ENCODE measurements at regions of chr16 and their contacts with region 1.

Region 1: GRCh38 chr16:54929090-54930004 is 1.3 kb upstream of the IRX5 start:
- DNase-seq: peak; percentile 99
- H3K4me3 Mint-ChIP-seq: peak overlapping the region; percentile 88
- H3K27ac Mint-ChIP-seq: peak overlapping the region; percentile 97
- H3K4me1 Mint-ChIP-seq: peaks cover 21% of the 10 kb centered on the region
- H3K27me3 Mint-ChIP-seq: no peaks in the 10 kb centered on the region
- CTCF ChIP-seq: peak; percentile 17

Region 2: GRCh38 chr16:53892155-53892554 is 1037.2 kb before region 1 on chr16:
- CTCF ChIA-PET with region 1: interaction called, 11 read pairs
- POLR2A ChIA-PET with region 1: interaction called, 8 read pairs
- intact Hi-C with region 1: loop called (anchors 2 kb)
- DNase-seq: peak; percentile 77
- H3K4me3 Mint-ChIP-seq: no peak overlapping the region
- H3K27ac Mint-ChIP-seq: no peak overlapping the region
- H3K4me1 Mint-ChIP-seq: peaks cover 16% of the 10 kb centered on the region
- H3K27me3 Mint-ChIP-seq: no peaks in the 10 kb centered on the region
- CTCF ChIP-seq: peak; percentile 67

Region 3: DNA sequence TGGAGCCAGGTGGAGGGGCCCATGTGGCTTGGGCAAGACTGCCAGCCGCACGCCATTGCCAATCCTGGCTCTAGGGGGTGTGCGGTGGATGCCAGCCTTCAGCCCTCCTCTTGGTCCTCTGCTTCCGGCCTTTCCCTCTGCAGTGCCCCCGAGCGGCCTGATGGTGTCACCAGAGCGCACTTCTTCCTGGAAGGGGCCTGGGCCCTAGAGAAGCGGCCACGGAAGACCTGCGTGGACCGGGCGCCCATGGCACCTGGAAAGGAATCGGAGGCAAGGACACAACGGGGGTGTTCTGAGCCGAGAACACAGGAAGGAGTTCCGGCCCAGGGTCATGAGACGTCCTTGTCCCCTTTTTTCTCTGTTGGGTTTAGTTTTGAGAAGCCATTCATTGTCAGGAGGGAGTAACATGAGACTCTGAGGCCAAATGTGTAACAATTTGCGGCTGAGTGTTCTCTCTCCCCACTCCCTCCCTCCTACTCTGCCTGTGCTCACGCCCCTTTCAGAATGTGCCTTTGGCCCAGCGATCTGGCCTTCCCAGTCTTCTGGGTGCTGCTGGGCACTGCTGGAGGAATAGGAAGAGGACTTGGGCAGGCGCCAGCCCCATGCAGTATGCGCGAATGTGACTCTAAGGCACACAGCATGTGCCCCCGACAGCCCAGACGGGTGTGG is 735.5 kb before region 1 on chr16:
- CTCF ChIA-PET with region 1: no interaction called
- POLR2A ChIA-PET with region 1: interaction called, 3 read pairs
- intact Hi-C with region 1: loop called (anchors 5 kb)
- DNase-seq: peak; percentile 86
- H3K4me3 Mint-ChIP-seq: peak overlapping the region; percentile 55
- H3K27ac Mint-ChIP-seq: peak overlapping the region; percentile 90
- H3K4me1 Mint-ChIP-seq: peaks cover 5% of the 10 kb centered on the region
- H3K27me3 Mint-ChIP-seq: no peaks in the 10 kb centered on the region
- CTCF ChIP-seq: peak; percentile 83

Region 4: GRCh38 chr16:54447591-54448440 is 481.5 kb before region 1 on chr16:
- CTCF ChIA-PET with region 1: no interaction called
- POLR2A ChIA-PET with region 1: interaction called, 30 read pairs
- intact Hi-C with region 1: loop called (anchors 5 kb)
- DNase-seq: peak; percentile 93
- H3K4me3 Mint-ChIP-seq: no peak overlapping the region
- H3K27ac Mint-ChIP-seq: no peak overlapping the region
- H3K4me1 Mint-ChIP-seq: peaks cover 32% of the 10 kb centered on the region
- H3K27me3 Mint-ChIP-seq: no peaks in the 10 kb centered on the region
- CTCF ChIP-seq: no peak

Region 5: DNA sequence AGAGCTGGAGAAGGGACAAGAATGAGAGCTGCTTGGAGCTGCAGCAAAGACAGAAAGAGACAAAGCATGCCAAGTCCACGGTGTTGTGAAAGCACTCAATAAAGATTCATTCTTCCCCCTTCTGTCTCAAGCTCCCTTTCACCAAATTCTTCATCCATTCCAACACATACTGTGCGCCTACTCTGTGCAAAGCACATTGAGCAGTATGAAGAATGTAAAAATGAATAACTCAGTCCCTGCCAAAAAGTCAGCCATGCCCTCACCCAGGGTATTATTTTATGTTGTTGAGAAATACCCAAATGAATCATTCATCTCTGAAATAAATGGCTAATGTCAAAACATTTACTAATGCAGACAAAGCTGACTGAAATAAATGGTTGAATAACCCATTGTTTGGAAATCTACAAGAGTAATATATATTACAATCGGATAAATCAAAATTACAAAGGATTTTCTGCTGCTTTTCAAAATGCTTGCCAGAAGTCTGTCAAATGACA is 281.6 kb before region 1 on chr16:
- CTCF ChIA-PET with region 1: interaction called, 5 read pairs
- POLR2A ChIA-PET with region 1: interaction called, 190 read pairs
- intact Hi-C with region 1: loop called (anchors 5 kb)
- DNase-seq: peak; percentile 91
- H3K4me3 Mint-ChIP-seq: peak overlapping the region; percentile 67
- H3K27ac Mint-ChIP-seq: peak overlapping the region; percentile 94
- H3K4me1 Mint-ChIP-seq: peaks cover 42% of the 10 kb centered on the region
- H3K27me3 Mint-ChIP-seq: no peaks in the 10 kb centered on the region
- CTCF ChIP-seq: no peak

Region 6: GRCh38 chr16:54817446-54817845 is 111.9 kb before region 1 on chr16:
- CTCF ChIA-PET with region 1: interaction called, 5 read pairs
- POLR2A ChIA-PET with region 1: interaction called, 5 read pairs
- intact Hi-C with region 1: loop called (anchors 1 kb)
- DNase-seq: peak; percentile 69
- H3K4me3 Mint-ChIP-seq: no peak overlapping the region
- H3K27ac Mint-ChIP-seq: no peak overlapping the region
- H3K4me1 Mint-ChIP-seq: no peaks in the 10 kb centered on the region
- H3K27me3 Mint-ChIP-seq: no peaks in the 10 kb centered on the region
- CTCF ChIP-seq: peak; percentile 42

Region 7: GRCh38 chr16:54944002-54944401 is 14.7 kb after region 1 on chr16:
- CTCF ChIA-PET with region 1: interaction called, 53 read pairs
- POLR2A ChIA-PET with region 1: interaction called, 334 read pairs
- intact Hi-C with region 1: no loop called
- DNase-seq: no peak
- H3K4me3 Mint-ChIP-seq: no peak overlapping the region
- H3K27ac Mint-ChIP-seq: no peak overlapping the region
- H3K4me1 Mint-ChIP-seq: peaks cover 13% of the 10 kb centered on the region
- H3K27me3 Mint-ChIP-seq: no peaks in the 10 kb centered on the region
- CTCF ChIP-seq: no peak